Activated CD4-positive, alpha-beta T cell treated with anti-CD3 and anti-CD28 coated beads for 36 hours (primary cell): ENCODE measurements at regions of chr15 and their contacts with region 1.

Region 1: DNA sequence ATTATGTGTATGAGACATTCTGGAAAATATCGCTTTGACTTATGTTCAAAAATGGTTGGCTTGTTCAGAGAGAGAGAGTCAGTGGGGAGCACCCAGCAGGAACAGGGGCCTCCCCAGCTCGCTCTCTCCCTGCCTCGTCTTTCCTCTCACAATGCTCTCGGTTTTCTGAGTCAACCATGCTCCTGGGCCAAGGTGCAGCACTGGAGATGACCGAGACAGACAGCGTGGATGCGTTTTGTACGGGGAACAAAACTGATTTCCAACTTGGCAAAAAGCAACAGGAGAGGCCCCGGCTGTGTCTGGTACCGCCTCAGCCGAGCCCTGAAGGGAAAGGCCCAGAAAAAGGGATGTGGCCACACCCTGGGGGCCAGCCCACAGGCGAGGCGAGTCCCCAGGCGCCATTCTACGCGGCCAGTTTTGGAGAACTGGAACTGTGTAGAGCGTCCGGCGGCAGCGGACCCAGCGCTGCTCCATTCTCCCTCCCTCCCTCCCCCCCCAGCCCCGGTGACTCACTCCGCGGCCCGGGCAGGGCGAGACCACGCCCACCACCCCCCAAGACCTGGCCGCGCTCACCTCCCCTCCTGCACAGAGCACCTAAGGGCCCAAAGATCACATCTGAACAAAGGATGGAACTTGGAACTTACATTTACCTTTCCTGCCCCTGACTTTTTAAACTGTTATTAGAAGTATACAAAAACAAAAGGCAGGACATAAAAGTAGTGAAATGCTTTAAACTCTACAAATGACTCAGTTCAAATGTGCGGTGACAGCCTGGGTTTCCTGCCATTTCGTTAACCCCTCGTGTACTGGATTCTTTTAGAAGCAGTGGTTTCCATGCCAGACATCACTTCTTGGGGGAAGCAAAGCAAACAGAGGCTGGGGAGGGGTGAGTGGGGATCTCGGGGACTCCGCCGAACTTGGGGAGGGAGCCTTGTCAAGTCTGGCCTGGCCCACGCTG is 12.7 kb downstream of the ATP10A start:
- DNase-seq: peak; percentile 87
- ATAC-seq: peak; percentile 79
- H3K4me3 Mint-ChIP-seq: peak overlapping the region; percentile 76
- H3K27ac Mint-ChIP-seq: peak overlapping the region; percentile 100
- H3K4me1 Mint-ChIP-seq: peaks cover 92% of the 10 kb centered on the region
- H3K27me3 Mint-ChIP-seq: no peaks in the 10 kb centered on the region

Region 2: DNA sequence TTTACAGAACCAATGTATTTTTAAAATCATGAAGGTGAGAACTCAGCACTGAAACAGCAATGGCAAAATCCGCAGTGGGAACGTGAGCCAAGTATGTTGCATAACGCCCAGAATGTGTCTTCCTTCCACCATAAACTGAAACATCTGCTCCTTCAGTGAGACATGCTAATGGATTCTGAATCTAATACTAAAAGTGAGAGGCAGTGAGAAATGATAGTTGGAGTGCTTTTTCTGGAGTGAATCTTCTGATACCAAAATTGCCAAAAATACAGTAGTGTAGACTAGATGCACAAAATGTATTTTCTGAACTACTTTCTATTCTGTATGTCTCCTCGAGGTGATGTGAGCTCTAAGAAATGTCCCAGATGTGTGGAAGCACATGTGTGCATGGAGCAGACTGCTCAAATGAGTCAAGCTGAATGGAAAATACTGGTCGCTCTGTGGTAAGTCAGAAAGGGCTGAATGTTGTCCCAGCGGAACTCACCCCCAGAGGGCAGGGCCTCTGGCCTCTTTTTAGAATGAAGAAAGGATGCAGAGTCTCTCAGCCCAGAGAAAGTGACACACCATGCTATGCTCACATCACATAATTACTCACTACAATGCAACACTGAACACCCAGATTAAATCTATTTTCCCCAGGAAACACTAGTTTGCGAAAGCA is 60.3 kb before region 1 on chr15:
- CTCF ChIA-PET with region 1: no interaction called
- POLR2A ChIA-PET with region 1: interaction called, 3 read pairs
- intact Hi-C with region 1: loop called (anchors 1 kb)
- DNase-seq: peak; percentile 78
- ATAC-seq: peak; percentile 98
- H3K4me3 Mint-ChIP-seq: no peak overlapping the region
- H3K27ac Mint-ChIP-seq: peak overlapping the region; percentile 65
- H3K4me1 Mint-ChIP-seq: peaks cover 62% of the 10 kb centered on the region
- H3K27me3 Mint-ChIP-seq: no peaks in the 10 kb centered on the region

Region 3: GRCh38 chr15:25830844-25831451 is 19.5 kb before region 1 on chr15:
- CTCF ChIA-PET with region 1: interaction called, 4 read pairs
- POLR2A ChIA-PET with region 1: no interaction called
- intact Hi-C with region 1: loop called in 1 of 2 experiments (anchors 1 kb)
- DNase-seq: no peak
- ATAC-seq: no peak
- H3K4me3 Mint-ChIP-seq: no peak overlapping the region
- H3K27ac Mint-ChIP-seq: no peak overlapping the region
- H3K4me1 Mint-ChIP-seq: peaks cover 38% of the 10 kb centered on the region
- H3K27me3 Mint-ChIP-seq: no peaks in the 10 kb centered on the region

Region 4: DNA sequence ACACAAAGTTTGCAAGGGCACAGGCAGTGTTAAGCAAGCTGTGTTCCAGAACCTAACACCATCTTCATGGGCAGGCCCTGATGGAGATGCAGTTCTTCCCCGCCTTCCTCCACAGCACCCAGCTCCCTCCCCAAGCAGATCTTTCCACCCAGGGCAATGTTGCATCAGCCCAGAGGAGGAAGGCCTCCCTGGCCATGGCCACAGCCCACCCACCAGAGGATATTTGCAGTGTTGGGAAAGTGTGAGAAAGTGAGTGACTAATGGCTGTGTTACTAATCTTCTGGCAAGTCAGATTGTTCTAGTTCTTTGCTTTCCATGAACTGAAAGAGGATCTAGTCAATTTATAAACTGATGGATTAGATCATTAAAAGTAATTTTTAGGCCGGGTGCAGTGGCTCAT is 54.7 kb after region 1 on chr15:
- CTCF ChIA-PET with region 1: no interaction called
- POLR2A ChIA-PET with region 1: no interaction called
- intact Hi-C with region 1: loop called in 1 of 2 experiments (anchors 1 kb)
- DNase-seq: peak; percentile 72
- ATAC-seq: peak; percentile 94
- H3K4me3 Mint-ChIP-seq: no peak overlapping the region
- H3K27ac Mint-ChIP-seq: peak overlapping the region; percentile 74
- H3K4me1 Mint-ChIP-seq: peaks cover 16% of the 10 kb centered on the region
- H3K27me3 Mint-ChIP-seq: no peaks in the 10 kb centered on the region